ENCODE measurements at regions of chr15 and their contacts with region 1.

Region 1: GRCh38 chr15:84981711-84982300 is at the start of gene PDE8A:
- DNase-seq: no peak
- ATAC-seq: peak; percentile 42
- H3K4me3 ChIP-seq: peak within 1 kb of the TSS; percentile 77 to 78
- H3K27ac ChIP-seq: peak within 1 kb of the TSS; percentile 84
- H3K4me1 ChIP-seq: peaks cover 30% of the 10 kb centered on the region
- H3K27me3 ChIP-seq: no peaks in the 10 kb centered on the region
- CTCF ChIP-seq: no peak
- total RNA-seq, gene PDE8A: 40.0 TPM

Region 2: GRCh38 chr15:85757939-85758654 is 776.3 kb after region 1 on chr15:
- CTCF ChIA-PET with region 1: interaction called, 11 read pairs
- POLR2A ChIA-PET with region 1: no interaction called
- in situ Hi-C with region 1: no loop called
- intact Hi-C with region 1: no loop called
- DNase-seq: no peak
- ATAC-seq: 0 out of 2 replicates have a peak, but pooled peaks have one; percentile 20
- H3K4me3 ChIP-seq: no peak overlapping the region
- H3K27ac ChIP-seq: no peak overlapping the region
- H3K4me1 ChIP-seq: peaks cover under 1% of the 10 kb centered on the region; the same call in 1 of the 2 replicates
- H3K27me3 ChIP-seq: no peaks in the 10 kb centered on the region
- CTCF ChIP-seq: no peak